ENCODE measurements at regions of chr15 and their contacts with region 1.

Region 1: GRCh38 chr15:61541516-61541915 is 312.4 kb upstream of the RORA start:
- DNase-seq: no peak
- H3K4me3 ChIP-seq: no peak overlapping the region
- H3K27ac ChIP-seq: no peak overlapping the region
- H3K4me1 ChIP-seq: no peaks in the 10 kb centered on the region
- H3K27me3 ChIP-seq: no peaks in the 10 kb centered on the region
- CTCF ChIP-seq: no peak

Region 2: GRCh38 chr15:61499376-61499775 is 42.1 kb before region 1 on chr15:
- intact Hi-C with region 1: loop called (anchors 10 kb)
- DNase-seq: no peak
- H3K4me3 ChIP-seq: no peak overlapping the region
- H3K27ac ChIP-seq: no peak overlapping the region
- H3K4me1 ChIP-seq: no peaks in the 10 kb centered on the region
- H3K27me3 ChIP-seq: no peaks in the 10 kb centered on the region
- CTCF ChIP-seq: no peak

Measured in colonic mucosa (tissue), 4 donors.